A673 (cell line): ENCODE measurements at regions of chr7 and their contacts with region 1.

Region 1: DNA sequence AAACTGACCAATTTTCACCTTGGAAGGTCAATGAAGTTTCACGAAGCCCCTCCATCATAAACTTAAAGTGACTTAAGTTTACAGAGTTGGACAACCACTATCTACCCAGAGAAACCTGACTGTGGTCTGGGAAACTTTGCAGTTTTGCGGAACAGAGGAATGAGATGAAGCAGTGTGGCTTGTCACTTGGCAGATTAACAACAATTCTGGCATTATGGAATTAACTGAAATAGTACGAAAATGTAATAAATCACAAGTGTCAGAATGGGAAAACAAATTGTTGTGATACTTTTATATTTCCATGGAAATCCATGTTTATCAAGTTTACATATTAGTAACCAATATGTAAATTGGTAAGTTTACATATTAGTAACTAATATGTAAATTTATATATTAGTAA is 4.9 kb downstream of the KMT2C start:
- DNase-seq: no peak
- H3K4me3 ChIP-seq: no peak overlapping the region
- H3K27ac ChIP-seq: no peak overlapping the region
- H3K4me1 ChIP-seq: peaks cover 5% of the 10 kb centered on the region
- H3K27me3 ChIP-seq: no peaks in the 10 kb centered on the region
- CTCF ChIP-seq: no peak

Region 2: DNA sequence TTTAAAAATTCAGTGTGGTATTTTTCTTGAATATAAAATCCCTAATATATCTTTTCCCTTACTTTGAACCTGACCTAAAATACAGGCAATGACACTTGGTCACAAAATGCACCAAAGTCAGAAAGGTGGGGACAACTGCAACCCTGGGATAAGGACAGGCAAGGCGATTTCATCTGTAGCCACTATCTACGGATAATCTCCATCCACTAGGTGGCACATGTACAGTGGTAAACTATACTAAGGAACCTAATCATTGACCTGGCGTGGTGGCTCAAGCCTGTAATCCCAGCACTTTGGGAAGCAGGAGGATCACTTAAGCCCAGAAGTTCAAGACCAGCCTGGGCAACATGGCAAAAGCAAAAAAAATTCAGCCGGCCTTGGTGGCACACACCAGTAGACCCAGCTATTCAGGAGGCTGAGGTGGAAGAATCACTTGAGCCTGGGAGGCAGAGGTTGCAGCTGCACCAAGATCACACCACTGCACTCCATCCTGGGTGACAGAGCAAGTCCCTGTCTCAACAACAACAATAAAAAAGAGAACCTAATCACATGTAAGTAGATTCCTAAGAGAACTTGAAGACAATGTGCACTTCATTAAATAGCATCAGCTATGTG is 94.0 kb before region 1 on chr7:
- CTCF ChIA-PET with region 1: no interaction called
- POLR2A ChIA-PET with region 1: interaction called, 9 read pairs
- intact Hi-C with region 1: loop called (anchors 5 kb)
- DNase-seq: peak; percentile 51
- H3K4me3 ChIP-seq: no peak overlapping the region
- H3K27ac ChIP-seq: no peak overlapping the region
- H3K4me1 ChIP-seq: peaks cover 19% of the 10 kb centered on the region
- H3K27me3 ChIP-seq: no peaks in the 10 kb centered on the region
- CTCF ChIP-seq: peak; percentile 69